Lower leg skin (tissue), 4 donors: ENCODE measurements at regions of chr4 and their contacts with region 1.

Region 1: DNA sequence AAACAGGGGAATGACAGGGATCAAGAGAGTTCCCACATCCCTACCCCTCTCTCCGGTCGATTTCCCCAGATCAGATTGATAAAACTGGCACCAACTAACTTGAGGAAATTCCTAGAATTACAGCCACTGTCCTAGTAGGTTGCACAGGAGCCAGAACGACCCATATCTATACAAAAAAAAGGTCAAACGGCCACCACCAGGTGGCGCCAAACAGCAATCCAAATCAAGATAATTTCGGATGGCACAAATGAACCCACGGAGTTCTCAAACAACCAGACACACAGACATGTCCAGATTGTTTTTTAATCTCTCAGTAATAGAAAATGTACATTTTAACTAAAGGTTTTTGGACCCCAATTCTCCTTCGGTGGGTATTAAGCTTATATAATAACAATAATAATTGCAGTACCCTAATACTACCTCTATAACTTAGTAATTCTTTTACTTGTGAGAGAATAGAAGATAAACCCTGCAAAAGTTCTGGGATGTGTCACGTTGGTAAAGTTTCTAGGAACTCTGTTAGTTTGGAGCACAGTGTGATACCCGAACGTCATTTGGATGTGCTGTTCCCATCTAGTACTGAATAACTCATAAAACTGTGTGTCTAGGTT is 212.6 kb downstream of the SPOCK3 start:
- DNase-seq: peak; percentile 44 to 92
- H3K4me3 ChIP-seq: no peak overlapping the region
- CTCF ChIP-seq: no peak
- POLR2A ChIP-seq: no peak

Region 2: GRCh38 chr4:167136270-167136669 is 114.6 kb after region 1 on chr4:
- intact Hi-C with region 1: no loop called
- DNase-seq: no peak
- H3K4me3 ChIP-seq: no peak overlapping the region
- CTCF ChIP-seq: no peak
- POLR2A ChIP-seq: no peak

Region 3: DNA sequence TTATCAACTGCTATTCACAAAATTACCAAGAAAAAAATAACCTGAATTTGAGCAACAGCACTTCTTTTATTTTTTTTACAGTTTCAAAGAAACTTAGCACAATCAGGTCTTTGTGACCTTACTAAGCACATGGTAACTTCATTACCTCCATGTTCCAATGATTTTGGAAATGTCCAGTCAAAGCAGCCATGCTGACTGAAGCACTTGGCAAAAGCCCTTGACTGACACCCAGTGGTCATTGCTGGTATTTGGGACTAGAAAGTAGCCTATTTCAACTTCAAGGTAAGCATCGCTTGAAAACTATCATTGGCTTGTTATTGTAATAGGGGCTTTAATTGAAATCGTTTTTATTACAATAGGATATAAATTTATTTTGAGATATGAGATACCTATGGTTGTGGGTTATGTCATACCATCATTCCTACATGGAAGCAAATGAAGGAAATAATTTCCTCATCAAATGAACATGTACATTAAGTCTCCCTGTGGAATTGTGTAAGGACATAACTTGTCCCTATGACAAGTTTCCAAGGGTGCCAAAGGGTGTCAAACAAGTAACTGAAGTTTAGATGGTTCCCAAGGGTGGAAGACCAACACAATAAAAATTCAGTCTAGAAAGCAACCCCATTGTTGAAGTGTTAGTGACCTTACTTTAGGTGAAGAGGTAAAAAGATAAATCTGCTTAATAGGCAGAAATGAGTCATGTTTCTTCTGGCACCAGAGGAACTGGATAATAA is 1055.5 kb after region 1 on chr4:
- intact Hi-C with region 1: loop called (anchors 10 kb)
- DNase-seq: peak in 1 of 2 donors; percentile 19
- H3K4me3 ChIP-seq: no peak overlapping the region
- CTCF ChIP-seq: no peak
- POLR2A ChIP-seq: no peak